Ascending aorta (tissue), 2 donors: ENCODE measurements at regions of chr2 and their contacts with region 1.

Region 1: DNA sequence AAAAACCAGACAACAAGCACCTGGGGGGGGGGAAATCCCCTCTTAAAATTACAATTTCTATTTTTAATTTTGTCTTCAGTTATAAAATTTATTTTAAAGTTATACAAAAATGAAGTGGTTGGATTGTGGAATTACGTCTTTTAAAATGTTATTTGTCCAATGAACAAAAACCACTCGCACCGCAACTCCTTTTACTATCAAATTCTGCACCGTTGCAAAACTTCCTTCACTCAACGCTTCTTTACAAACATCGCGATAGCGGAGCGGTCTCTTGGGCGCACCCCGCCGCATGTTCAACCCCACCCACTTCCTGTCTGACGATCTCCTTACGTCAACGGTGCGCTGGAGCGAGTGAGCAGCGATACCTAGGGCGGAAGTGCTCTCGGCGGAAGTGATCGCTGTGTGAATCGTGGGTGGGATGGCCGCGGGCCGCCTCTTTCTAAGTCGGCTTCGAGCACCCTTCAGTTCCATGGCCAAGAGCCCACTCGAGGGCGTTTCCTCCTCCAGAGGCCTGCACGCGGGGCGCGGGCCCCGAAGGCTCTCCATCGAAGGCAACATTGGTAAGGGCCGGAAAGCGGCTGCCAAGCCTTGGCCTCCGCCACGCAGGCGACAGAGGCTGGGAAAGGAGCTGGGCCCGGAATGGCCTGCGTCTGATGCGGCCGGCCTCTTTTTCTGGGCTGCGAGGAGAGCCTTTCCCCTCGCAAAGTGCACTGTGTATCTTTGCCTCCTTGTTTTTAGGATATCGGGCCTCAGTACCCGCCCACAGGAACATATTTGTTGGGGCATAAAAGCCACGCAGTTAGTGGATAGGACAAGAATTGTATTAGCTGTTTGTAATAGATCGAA is at the start of gene DGUOK:
- DNase-seq: peak; percentile 96 to 99
- H3K4me3 ChIP-seq: peak within 1 kb of the TSS; percentile 76 to 83
- H3K27ac ChIP-seq: peak within 1 kb of the TSS; percentile 95 to 97
- H3K4me1 ChIP-seq: peaks cover 3 to 28% of the 10 kb centered on the region in 2 donors
- H3K27me3 ChIP-seq: no peaks in the 10 kb centered on the region
- CTCF ChIP-seq: no peak
- total RNA-seq, gene DGUOK: 79.7 TPM

Region 2: DNA sequence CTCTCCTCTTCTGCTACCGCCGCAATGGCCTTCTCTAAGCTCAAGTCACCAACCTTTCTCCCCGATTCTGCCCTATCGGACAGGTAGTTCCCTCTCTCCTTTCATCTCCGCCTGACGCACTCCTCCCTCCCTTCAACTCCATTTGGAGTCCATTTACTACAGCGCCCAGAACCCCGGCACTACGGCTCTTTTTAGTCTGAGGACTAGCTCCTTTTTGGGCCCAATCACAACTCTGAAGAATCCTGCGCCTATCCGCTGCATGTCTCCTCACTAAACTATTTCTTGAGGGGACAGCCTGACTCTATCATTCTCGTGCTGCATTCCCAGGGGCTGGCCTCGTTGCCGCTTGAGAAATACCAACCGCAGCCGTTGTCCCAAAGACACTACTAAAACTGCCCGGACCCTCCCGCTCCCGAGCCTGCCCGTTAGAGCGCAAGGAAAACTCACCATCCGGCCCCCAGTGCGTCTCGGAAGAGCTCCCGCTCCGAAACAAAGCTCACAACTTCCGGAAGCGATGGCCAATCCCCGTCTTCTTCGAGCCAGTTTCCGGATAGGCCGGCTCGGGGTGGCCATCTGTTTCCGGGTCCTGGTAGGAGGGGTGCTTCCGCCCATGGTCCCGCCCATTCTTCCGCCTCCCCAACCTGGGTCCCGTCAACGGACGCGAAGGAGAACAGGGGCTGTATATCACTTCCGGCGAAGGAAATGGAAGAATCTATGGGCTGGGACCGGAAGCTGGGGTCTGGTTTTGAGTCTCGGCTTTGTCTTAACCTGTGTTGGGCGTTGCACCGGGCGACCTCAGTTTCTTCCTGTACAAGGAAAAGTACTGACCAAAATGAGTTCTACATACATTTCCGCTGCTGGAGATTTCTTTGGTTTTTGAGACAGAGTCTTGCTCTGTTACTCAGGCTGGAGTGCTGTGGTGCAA is 189.6 kb before region 1 on chr2 and contains the start of gene TPRKB:
- intact Hi-C with region 1: loop called (anchors 5 kb)
- DNase-seq: peak; percentile 84 to 98
- H3K4me3 ChIP-seq: peak within 1 kb of the TSS; percentile 73 to 79
- H3K27ac ChIP-seq: peak within 1 kb of the TSS; percentile 64 to 73
- H3K4me1 ChIP-seq: peaks cover 0 to 16% of the 10 kb centered on the region in 2 donors
- H3K27me3 ChIP-seq: no peaks in the 10 kb centered on the region
- CTCF ChIP-seq: no peak
- total RNA-seq, gene TPRKB: 11.1 TPM

Region 3: DNA sequence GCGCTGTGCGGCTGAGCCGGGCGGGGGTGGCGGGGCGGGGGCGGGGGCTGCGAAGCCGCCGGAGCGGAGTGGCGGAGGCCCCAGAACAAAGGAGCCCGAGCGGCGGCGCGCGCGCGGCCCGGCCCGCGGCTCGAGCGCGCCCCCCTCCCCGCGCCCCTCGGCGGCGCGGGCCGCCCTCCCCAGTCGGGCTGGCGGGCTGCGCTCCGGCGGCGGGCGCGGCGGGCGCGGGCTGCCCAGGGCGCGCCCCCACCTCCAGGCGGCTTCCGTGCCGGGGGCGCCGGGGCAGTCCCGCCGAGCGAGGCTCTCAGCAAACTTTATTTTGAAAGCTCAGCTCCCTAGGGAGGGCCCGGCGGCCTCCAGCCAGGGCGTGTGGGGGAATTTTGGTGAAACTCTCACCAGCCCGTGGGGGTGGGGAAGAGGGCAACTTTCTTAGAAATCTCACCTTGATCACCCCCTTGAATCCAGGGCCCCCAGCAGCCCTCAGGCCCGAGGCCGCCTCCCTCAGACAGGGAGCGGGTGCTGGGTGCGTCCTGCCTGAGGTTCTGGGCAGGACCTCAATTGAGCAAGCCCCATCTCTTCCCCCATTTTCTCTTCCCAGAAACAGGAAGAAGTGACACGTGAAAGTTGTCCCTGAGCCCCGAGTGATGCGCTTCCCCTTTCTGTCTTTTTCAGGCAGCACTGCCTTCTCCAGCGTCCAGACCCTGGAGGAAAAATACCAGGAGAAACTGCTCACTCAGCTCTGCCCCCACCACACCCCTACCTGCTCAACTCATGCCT is 58.8 kb after region 1 on chr2:
- intact Hi-C with region 1: loop called (anchors 5 kb)
- DNase-seq: no peak
- H3K4me3 ChIP-seq: peak overlapping the region; percentile 46 to 74
- H3K27ac ChIP-seq: no peak overlapping the region
- H3K4me1 ChIP-seq: peaks cover 6 to 34% of the 10 kb centered on the region in 2 donors
- H3K27me3 ChIP-seq: no peaks in the 10 kb centered on the region
- CTCF ChIP-seq: no peak

Region 4: GRCh38 chr2:74119912-74120825 is 193.5 kb after region 1 on chr2:
- intact Hi-C with region 1: loop called (anchors 5 kb)
- DNase-seq: peak in 1 of 2 donors; percentile 89
- H3K4me3 ChIP-seq: peak overlapping the region; percentile 70 to 78
- H3K27ac ChIP-seq: peak overlapping the region; percentile 84 to 87
- H3K4me1 ChIP-seq: no peaks in the 10 kb centered on the region
- H3K27me3 ChIP-seq: no peaks in the 10 kb centered on the region
- CTCF ChIP-seq: peak; percentile 57 to 79 (median 76)

Region 5: GRCh38 chr2:74261204-74261864 is 334.6 kb after region 1 on chr2:
- intact Hi-C with region 1: loop called (anchors 5 kb)
- DNase-seq: peak in 1 of 2 donors; percentile 73
- H3K4me3 ChIP-seq: no peak overlapping the region
- H3K27ac ChIP-seq: no peak overlapping the region
- H3K4me1 ChIP-seq: no peaks in the 10 kb centered on the region
- H3K27me3 ChIP-seq: no peaks in the 10 kb centered on the region
- CTCF ChIP-seq: peak; percentile 49 to 77 (median 65)